ENCODE measurements at regions of chr15 and their contacts with region 1.

Region 1: GRCh38 chr15:84572231-84572630 is 28.6 kb upstream of the ZSCAN2 start:
- DNase-seq: no peak
- ATAC-seq: no peak
- H3K4me3 ChIP-seq: no peak overlapping the region
- H3K4me3 Mint-ChIP-seq: no peak overlapping the region
- H3K27ac ChIP-seq: no peak overlapping the region
- H3K27ac Mint-ChIP-seq: peak overlapping the region; percentile 37 to 64
- H3K4me1 ChIP-seq: peaks cover 0 to 8% of the 10 kb centered on the region in 2 experiments
- H3K4me1 Mint-ChIP-seq: peaks cover 6 to 13% (median 11%) of the 10 kb centered on the region in 3 donors
- H3K27me3 ChIP-seq: no peaks in the 10 kb centered on the region
- H3K27me3 Mint-ChIP-seq: no peaks in the 10 kb centered on the region

Region 2: DNA sequence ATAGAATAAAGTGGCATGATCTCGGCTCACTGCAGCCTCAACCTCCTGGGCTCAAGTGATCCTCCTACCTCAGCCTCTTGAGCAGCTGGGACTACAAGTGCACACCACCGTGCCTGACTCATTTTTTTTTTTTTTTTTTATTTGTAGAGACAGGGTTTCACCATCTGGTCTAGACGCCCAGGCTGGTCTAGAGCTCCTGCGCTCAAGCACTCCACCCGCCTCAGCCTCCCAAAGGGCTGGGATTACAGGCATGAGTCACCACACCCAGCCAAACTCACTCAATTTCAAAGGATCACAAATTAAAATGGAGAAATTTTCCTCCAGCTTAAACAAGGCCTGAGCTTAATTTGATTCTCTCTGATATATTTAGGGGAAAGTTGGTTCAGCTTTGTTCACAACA is 113.1 kb after region 1 on chr15:
- CTCF ChIA-PET with region 1: no interaction called
- POLR2A ChIA-PET with region 1: no interaction called
- DNase-seq: peak in 1 of 35 experiments; percentile 2
- ATAC-seq: no peak
- H3K4me3 ChIP-seq: no peak overlapping the region
- H3K4me3 Mint-ChIP-seq: no peak overlapping the region
- H3K27ac ChIP-seq: no peak overlapping the region
- H3K27ac Mint-ChIP-seq: peak overlapping the region in 1 of 2 donors; percentile 52
- H3K4me1 ChIP-seq: no peaks in the 10 kb centered on the region
- H3K4me1 Mint-ChIP-seq: peaks cover 5 to 32% (median 21%) of the 10 kb centered on the region in 3 donors
- H3K27me3 ChIP-seq: no peaks in the 10 kb centered on the region
- H3K27me3 Mint-ChIP-seq: no peaks in the 10 kb centered on the region

Region 3: GRCh38 chr15:84725001-84725491 is 152.8 kb after region 1 on chr15:
- CTCF ChIA-PET with region 1: no interaction called
- POLR2A ChIA-PET with region 1: interaction called in 1 of 2 experiments, 10 read pairs
- DNase-seq: peak in 16 of 35 experiments; percentile 9 to 53 (median 26)
- ATAC-seq: peak; percentile 68 to 88 (median 78)
- H3K4me3 ChIP-seq: no peak overlapping the region
- H3K4me3 Mint-ChIP-seq: peak overlapping the region; percentile 55 to 66 (median 66)
- H3K27ac ChIP-seq: peak overlapping the region; percentile 83
- H3K27ac Mint-ChIP-seq: peak overlapping the region; percentile 97 to 98
- H3K4me1 ChIP-seq: peaks cover 37 to 65% of the 10 kb centered on the region in 2 experiments
- H3K4me1 Mint-ChIP-seq: peaks cover 52 to 66% (median 65%) of the 10 kb centered on the region in 3 donors
- H3K27me3 ChIP-seq: no peaks in the 10 kb centered on the region
- H3K27me3 Mint-ChIP-seq: no peaks in the 10 kb centered on the region